Activated naive CD4-positive, alpha-beta T cell treated with anti-CD3 and anti-CD28 coated beads for 36 hours (primary cell): ENCODE measurements at regions of chr13 and their contacts with region 1.

Region 1: GRCh38 chr13:75219479-75220237 is 262.3 kb downstream of the TBC1D4 start:
- DNase-seq: peak; percentile 89
- H3K4me3 Mint-ChIP-seq: peak overlapping the region; percentile 17
- H3K27ac Mint-ChIP-seq: no peak overlapping the region
- H3K4me1 Mint-ChIP-seq: peaks cover 3% of the 10 kb centered on the region
- H3K27me3 Mint-ChIP-seq: peaks cover 31% of the 10 kb centered on the region

Region 2: DNA sequence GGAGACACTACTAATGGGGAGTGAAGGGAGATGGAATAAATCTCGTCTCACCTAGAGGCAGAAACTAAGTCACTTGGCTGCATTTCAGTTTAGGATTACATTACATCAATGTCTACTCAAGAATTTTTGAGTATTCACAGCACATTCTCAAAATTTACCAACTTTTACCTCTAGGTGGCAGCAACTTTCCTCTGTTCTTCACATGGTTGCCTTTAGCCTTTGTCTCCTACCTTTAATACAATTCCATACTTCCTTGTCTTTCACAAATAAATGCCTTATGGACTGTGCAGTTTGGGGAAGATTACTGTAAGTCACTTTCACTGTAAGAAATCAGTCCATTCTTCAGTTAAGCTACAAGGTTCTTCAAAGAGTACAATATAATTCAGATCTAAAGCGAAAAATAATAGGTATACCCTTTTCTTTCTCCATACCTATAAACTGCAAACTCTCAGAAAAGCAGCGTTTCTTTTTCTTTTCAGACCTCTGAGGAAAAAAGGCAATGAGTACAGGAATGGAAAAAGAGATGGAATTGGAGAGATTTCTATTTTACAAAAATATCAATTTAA is 1464.8 kb before region 1 on chr13:
- CTCF ChIA-PET with region 1: no interaction called
- intact Hi-C with region 1: loop called (anchors 2 kb)
- DNase-seq: peak; percentile 20
- H3K4me3 Mint-ChIP-seq: no peak overlapping the region
- H3K27ac Mint-ChIP-seq: no peak overlapping the region
- H3K4me1 Mint-ChIP-seq: peaks cover 33% of the 10 kb centered on the region
- H3K27me3 Mint-ChIP-seq: no peaks in the 10 kb centered on the region

Region 3: DNA sequence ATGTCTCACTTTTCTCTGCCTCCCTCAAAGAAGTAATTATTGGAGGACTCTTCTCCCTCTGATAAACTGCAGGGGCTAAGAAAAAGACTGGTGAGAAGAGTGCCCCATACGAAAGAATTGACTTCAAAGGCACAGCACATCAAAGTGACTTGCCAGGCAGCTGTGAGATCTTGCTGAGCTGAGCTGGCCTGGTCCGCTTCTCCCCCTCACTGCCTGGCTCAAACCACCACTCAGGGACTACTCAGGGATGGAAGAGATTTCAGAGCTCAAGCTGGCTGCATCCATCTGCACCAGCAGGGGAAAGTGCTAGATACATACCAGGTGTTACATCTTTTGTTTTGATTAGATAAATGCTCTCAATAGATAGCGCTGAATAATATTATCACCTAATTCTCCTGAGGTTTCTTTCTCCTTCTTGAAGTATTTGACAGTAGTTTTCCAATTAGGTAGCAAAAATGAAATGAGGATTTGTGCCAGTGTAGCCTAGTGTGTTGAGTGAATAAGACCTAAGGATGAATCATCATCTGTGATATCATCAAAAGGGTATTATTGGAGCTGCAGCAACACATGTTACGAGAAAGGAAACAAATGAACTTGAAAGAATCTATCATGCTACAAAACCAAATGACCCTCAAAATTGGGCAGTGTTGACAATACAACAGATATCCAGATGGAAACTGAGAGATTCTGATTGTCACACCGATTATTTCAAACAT is 117.5 kb before region 1 on chr13:
- CTCF ChIA-PET with region 1: interaction called, 13 read pairs
- intact Hi-C with region 1: no loop called
- DNase-seq: no peak
- H3K4me3 Mint-ChIP-seq: no peak overlapping the region
- H3K27ac Mint-ChIP-seq: no peak overlapping the region
- H3K4me1 Mint-ChIP-seq: no peaks in the 10 kb centered on the region
- H3K27me3 Mint-ChIP-seq: peaks cover 15% of the 10 kb centered on the region

Region 4: DNA sequence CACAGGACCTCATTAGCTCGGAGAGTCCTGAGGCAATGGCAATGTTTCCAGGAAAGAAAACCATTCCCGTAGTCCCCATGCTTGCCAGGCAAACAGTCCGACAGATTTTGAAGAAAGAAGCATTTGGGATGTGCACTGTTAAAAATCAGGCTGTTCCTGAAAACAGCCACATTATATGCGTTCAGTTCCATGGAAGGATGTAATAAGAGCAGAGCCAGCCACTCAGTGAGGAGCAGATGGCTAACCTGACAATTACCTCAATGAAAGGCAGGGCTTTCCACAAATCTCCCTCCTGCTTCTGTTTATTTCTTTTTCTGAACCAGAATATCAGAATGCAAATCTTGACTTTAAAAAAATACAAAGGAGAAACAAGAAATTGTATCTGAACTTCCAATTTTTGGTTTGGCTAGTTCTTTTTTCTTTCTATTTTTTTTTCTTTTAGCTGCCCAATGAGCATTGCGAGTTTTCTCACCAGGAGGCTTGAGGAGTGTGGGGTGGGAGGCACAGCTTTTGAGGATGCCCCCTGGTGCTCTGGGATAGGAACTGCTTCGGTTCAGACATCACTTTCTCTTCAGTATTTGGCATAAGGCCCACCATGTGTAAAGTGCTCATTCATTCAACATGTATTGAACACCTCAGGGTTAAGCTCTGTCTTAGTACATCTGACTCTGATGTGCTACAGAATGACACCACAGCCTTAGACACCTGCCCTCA is 138.1 kb after region 1 on chr13:
- CTCF ChIA-PET with region 1: no interaction called
- intact Hi-C with region 1: loop called (anchors 5 kb)
- DNase-seq: peak; percentile 61
- H3K4me3 Mint-ChIP-seq: no peak overlapping the region
- H3K27ac Mint-ChIP-seq: no peak overlapping the region
- H3K4me1 Mint-ChIP-seq: peaks cover 5% of the 10 kb centered on the region
- H3K27me3 Mint-ChIP-seq: no peaks in the 10 kb centered on the region